ENCODE measurements at regions of chr1 and their contacts with region 1.

Region 1: GRCh38 chr1:155001675-155002463 is 733 bp upstream of the ZBTB7B start:
- DNase-seq: peak; percentile 98
- H3K4me3 ChIP-seq: peak overlapping the region; percentile 71
- H3K27ac ChIP-seq: peak overlapping the region; percentile 92
- H3K4me1 ChIP-seq: peaks cover 65% of the 10 kb centered on the region
- CTCF ChIP-seq: peak; percentile 74

Region 2: DNA sequence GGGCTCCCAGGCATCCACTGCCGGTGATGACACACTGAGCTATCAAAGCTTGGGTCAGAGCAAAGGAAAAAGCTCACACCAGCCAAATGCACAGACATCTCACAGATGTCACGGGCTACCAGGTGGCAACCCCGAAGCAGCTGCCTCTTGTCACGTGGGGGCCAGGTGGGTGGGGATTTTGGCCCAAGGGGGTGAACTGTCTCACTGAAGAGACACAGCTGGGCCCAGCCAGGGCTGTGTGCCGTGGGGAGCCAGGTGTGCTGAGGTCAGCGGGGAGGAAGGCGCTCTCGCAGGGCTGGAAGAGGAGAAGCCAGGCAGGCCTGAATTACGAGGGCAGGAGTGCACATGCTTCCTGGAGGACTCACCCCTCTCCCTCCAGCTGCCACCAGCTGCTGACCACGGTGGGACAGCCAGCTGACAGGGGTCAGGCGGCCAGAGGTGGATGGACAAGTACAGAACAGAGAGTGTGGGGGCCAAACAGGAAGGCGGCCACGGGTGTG is 164.1 kb before region 1 on chr1:
- CTCF ChIA-PET with region 1: no interaction called
- POLR2A ChIA-PET with region 1: no interaction called
- intact Hi-C with region 1: no loop called
- DNase-seq: peak; percentile 95
- H3K4me3 ChIP-seq: no peak overlapping the region
- H3K27ac ChIP-seq: peak overlapping the region; percentile 46
- H3K4me1 ChIP-seq: peaks cover 69% of the 10 kb centered on the region
- CTCF ChIP-seq: no peak

Region 3: DNA sequence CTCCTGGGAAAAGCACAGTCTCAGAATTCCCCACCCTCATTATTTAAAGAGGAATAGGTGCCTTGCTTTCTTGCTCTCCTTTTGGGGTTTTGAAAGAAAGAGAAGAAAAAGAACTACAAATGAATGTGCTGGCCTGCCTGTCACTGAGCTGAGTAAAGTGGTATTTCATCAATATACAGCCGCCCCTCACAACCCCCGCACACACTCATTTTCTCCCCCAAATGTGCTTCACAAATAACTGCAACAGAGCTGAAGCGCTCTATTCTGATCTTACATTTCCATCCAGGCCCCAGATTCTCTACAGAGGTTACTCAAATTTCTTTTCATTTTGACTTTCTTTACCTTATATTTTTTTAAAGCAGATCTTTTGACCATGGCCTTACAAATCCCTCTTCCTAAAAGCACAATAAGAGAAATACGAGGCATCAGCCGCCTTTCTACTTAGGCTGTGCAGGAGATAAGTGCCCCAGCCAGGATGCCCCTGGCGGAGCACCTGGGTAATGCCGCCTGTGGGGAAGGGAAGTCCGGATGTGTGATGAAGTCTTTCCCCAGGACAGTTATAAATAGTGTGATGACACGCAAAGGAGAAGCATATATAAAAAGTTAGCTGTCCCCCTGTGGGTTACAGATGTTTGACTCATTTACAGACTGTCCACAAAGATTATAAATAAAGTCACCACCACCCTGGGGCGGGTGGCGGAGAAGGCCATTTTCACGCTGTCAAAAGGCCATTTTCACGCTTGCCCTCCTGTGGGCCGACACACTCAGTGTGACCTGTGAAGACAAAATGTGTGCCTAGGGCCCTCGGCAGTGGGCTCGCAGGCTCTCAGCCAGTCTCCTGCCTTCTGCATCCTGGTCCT is 138.3 kb before region 1 on chr1:
- CTCF ChIA-PET with region 1: no interaction called
- POLR2A ChIA-PET with region 1: no interaction called
- intact Hi-C with region 1: loop called (anchors 5 kb)
- DNase-seq: peak; percentile 83
- H3K4me3 ChIP-seq: peak overlapping the region; percentile 59
- H3K27ac ChIP-seq: peak overlapping the region; percentile 91
- H3K4me1 ChIP-seq: peaks cover 98% of the 10 kb centered on the region
- CTCF ChIP-seq: peak; percentile 93

Region 4: DNA sequence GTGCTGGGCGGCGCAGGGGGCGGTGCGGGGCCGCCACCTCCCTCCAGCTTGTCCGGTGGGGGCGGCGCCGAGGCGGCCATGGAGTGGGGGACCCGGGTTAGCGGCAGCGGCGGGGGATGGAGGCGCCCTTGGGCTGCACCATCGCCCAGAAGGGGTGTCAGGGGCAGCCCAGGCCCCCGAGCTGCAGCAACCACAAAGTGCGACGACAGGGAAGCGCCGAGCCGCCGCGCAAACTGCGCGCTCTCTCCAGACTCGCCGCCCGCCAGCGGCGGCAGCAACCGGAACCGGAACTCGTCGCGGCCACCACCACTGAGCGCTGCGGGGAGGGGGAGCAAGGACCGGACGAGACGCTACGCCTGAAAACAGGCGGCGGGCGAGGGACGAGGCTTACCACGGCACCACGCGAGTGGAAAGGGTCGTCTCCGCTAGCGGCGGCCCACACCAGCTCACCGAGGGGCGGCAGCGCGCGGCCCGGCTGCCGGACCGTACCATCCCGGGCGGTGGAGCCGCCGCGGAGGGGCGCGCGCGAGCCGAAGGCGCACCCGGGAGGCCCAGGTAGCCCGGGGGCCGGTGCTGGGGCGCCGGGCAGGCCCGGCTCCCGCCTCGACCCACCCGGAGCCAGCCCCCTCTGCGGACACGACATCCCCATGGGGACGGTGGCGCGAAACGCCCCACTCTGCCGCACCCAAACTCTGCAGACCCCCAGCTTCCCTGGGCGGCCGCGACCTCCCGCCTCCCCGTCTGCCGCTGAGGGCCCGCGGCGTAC is 40.2 kb before region 1 on chr1 and contains the start of gene PYGO2:
- CTCF ChIA-PET with region 1: no interaction called
- POLR2A ChIA-PET with region 1: no interaction called
- intact Hi-C with region 1: loop called (anchors 1 kb)
- DNase-seq: peak; percentile 88
- H3K4me3 ChIP-seq: peak within 1 kb of the TSS; percentile 82
- H3K27ac ChIP-seq: peak within 1 kb of the TSS; percentile 77
- H3K4me1 ChIP-seq: peaks cover 33% of the 10 kb centered on the region
- CTCF ChIP-seq: peak; percentile 80
- total RNA-seq, gene PYGO2: 36.5 and 44.3 TPM in 2 replicates

Region 5: DNA sequence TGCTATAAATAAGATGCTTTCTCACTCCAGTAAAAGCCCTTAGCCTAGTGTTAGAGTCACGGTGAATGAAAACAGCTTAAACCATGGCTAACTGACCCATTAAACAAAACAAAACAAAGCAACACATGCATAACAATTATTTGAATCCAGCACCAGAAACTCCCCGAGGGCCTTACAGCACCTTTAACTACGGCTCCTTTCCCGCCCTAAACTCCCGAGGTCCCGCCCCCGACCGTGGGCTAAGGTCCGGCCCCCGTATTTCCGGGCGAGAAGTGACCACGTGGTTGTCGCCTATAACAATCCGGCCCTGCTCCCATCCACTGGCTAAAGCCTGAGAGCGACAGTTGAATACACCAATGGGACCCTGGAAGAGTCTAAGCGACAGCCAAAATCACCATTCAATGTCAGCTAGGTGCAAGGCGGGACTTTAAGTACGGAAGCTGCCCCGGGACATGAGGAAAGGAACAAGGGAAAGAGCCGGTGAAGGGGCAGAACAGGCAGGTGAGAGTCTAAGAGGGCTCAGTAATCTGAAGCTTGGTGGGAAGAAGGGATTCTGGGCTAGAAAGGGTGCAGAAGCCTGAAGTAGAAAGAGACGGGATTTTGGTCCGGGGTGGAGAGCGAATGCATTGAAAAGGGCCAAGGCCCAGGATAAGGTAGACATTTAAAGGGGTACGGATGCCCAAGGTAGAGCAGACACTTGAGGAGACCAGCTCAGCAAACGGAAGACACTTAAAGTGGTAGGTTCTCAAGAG is 18.8 kb before region 1 on chr1 and contains the start of gene FLAD1:
- CTCF ChIA-PET with region 1: interaction called, 6 read pairs
- POLR2A ChIA-PET with region 1: interaction called, 6 read pairs
- intact Hi-C with region 1: loop called (anchors 1 kb)
- DNase-seq: peak; percentile 100
- H3K4me3 ChIP-seq: peak within 1 kb of the TSS; percentile 77
- H3K27ac ChIP-seq: peak within 1 kb of the TSS; percentile 80
- H3K4me1 ChIP-seq: peaks cover 21% of the 10 kb centered on the region
- CTCF ChIP-seq: no peak
- total RNA-seq, gene FLAD1: 52.7 and 55.7 TPM in 2 replicates

Region 6: GRCh38 chr1:155050560-155051341 is 48.9 kb after region 1 on chr1 and contains the start of gene ADAM15:
- CTCF ChIA-PET with region 1: no interaction called
- POLR2A ChIA-PET with region 1: interaction called, 3 read pairs
- intact Hi-C with region 1: loop called (anchors 1 kb)
- DNase-seq: peak; percentile 86
- H3K4me3 ChIP-seq: peak within 1 kb of the TSS; percentile 91
- H3K27ac ChIP-seq: peak within 1 kb of the TSS; percentile 10
- H3K4me1 ChIP-seq: peaks cover 35% of the 10 kb centered on the region
- CTCF ChIP-seq: peak; percentile 93
- total RNA-seq, gene ADAM15: 14.2 and 19.7 TPM in 2 replicates

Region 7: DNA sequence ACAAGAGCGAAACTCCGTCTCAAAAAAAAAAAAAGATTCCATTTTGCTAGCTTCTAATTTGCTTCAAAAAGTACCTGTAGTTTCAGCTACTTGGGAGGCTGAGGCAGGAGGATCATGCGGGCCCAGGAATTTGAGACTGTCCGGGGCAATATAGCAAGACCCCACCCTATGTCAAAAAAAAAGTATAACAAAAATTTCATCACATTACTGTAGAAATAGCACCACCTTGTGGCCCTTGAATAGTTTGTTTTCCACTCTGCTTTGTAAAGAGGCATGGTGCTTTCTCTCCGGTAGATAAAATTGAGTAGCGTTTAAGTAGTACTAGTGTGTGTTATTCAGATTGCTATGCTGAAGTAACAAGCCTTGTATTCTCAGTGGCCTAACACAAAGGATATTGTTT is 589.9 kb after region 1 on chr1:
- CTCF ChIA-PET with region 1: no interaction called
- POLR2A ChIA-PET with region 1: no interaction called
- intact Hi-C with region 1: no loop called
- DNase-seq: peak; percentile 80
- H3K4me3 ChIP-seq: no peak overlapping the region
- H3K27ac ChIP-seq: no peak overlapping the region
- H3K4me1 ChIP-seq: no peaks in the 10 kb centered on the region
- CTCF ChIP-seq: peak; percentile 80

Measured in OCI-LY7 (cell line).